Posterior vena cava (tissue), 2 donors: ENCODE measurements at regions of chr1 and their contacts with region 1.

Region 1: GRCh38 chr1:41840592-41841246 is 78.0 kb downstream of the HIVEP3 start:
- DNase-seq: no peak

Region 2: DNA sequence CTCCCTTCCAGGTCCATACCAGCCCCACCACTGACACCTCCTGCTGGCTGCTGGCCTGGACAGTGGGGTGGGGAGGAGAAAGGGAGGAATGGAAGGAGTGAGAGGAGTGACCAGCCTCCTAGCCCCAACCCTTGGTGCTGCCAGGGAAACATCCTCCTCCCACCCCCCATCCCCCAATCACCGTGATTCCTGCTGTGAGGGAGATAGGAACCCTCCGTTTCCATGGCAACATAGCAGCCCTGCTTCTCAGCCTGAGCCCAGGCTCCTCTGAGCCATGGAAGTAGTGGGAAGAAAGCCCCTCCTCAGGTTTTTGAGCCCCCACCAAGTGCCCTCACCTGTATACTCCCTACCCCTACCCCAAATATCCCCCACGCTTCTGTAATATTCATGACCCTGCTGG is 554.2 kb before region 1 on chr1:
- intact Hi-C with region 1: no loop called
- DNase-seq: no peak

Region 3: DNA sequence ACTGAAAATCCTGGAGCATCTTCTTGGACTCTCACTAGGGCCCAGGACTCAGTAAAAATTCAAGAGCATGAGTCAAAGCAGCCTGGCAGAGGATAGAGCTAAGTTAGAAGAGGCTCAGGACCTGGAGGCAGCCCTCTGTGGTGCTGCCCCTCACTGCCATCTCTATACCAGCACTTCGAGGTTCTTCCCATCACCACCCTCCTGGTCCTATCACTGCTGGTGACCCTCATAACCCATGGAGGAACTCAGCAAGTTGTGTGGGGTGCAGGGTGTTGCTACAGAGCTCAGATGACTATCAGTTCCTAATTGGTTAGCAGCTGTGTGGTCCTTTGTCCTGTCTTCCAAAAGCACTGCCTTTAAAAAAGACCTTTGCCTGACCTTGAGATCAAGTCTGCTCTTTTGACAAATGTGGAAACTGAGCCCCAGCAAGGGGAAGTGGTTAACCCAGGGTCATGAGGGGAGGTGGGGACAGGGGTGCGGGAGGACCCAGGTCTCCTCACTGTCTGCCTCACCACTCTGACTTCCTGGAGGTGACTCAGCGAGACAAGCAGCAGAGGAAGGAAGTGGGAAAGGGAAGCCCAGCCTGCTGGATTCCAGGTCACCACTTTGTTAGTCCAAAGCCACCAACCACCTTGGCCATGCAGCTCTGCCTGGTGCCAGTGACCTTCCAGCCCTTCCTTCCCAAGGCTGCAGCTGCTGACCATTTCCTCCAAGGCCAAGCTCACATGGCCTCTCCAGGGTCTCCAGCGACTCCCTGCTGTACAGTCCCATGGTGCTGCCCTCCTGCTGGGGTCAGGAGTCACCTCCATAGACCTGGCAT is 156.8 kb before region 1 on chr1:
- intact Hi-C with region 1: no loop called
- DNase-seq: no peak

Region 4: DNA sequence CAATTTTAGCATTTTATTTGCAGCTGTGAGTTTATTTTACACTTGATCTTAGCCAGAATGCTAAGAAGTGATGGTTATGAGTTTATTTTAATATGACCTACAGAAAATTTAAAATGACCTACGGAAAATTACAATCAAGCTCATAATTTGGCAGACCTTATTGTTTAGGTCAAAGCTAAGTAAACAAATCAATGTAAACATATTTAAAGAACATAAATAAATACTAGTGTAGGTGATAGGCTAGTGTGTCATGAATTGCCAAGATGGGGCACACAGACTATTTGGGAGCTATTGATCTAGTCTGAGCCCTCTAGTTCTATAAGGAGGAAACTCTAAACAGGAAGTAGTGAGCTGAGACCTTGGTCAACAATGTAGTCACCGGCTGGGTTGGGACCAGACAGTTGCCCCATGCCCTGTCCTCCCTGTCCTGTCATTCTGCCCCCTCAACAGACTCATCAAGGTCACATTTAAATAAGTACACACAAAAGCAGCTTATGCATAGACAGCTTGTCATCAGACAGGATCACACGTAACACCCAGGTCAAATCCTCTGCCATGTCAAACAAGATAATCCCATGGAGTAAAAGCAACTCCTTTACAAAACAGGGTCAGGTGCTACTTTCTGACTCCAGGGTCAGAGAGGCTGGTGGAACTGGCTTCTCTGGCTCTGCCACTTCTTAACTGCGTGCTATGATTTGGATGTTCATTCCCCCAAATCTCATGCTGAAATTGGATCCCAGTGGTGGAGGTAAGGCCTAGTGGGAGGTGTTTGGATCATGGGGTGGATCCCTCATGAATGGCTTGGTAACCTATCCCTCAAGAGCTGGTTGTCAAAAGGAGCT is 51.1 kb before region 1 on chr1:
- intact Hi-C with region 1: loop called in 1 of 2 experiments (anchors 1 kb)
- DNase-seq: no peak